ENCODE measurements at regions of chr20 and their contacts with region 1.

Region 1: DNA sequence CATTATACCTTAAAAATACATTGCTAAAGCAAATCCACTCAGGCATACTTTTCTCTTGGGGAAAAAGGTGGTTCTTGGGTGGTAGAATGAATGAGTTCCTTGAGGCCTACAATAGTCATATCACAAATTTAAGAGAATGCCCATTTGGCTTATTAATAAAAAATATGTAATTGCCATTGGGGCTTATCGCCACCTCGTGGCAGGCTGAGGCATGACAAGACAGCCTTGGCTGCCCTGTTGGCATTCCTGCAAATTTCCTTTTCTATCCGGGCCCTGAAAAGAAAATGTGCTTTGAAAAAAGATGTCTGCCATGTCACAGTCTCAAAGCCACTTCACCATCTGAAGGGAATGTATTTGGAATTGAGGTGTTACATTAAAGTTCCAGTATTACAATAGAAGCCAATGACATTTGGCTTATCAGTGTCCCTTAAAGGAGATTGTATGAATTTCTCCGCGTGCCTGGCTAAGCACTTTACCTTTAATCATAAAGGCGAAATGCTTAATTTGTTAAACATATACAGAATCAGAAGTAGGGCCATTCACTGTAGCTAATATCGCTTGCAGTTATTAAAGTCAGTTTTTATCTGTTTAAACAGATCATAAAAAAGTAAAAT is 188.3 kb upstream of the ZFP64 start:
- DNase-seq: no peak
- H3K4me3 Mint-ChIP-seq: no peak overlapping the region
- H3K27ac Mint-ChIP-seq: no peak overlapping the region
- H3K4me1 Mint-ChIP-seq: no peaks in the 10 kb centered on the region
- H3K27me3 Mint-ChIP-seq: no peaks in the 10 kb centered on the region

Region 2: DNA sequence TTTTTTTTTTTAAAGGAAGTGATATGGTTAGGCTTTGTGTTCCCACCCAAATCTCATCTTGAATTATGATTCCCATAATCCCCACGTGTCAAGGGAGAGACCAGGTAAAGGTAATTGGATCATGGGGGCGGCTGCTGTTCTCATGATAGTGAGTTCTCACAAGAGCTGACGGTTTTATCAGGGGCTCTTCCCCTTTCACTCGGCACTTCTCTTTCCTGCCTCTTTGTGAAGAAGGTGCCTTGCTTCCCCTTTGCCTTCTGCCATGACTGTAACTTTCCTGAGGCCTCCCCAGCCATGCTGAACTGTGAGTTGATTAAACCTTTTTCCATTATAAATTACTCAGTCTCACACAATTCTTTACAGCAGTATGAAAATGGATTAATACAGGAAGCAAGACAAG is 252.5 kb before region 1 on chr20:
- intact Hi-C with region 1: loop called (anchors 5 kb)
- DNase-seq: no peak
- H3K4me3 Mint-ChIP-seq: no peak overlapping the region
- H3K27ac Mint-ChIP-seq: no peak overlapping the region
- H3K4me1 Mint-ChIP-seq: no peaks in the 10 kb centered on the region
- H3K27me3 Mint-ChIP-seq: peaks cover 1% of the 10 kb centered on the region

Region 3: DNA sequence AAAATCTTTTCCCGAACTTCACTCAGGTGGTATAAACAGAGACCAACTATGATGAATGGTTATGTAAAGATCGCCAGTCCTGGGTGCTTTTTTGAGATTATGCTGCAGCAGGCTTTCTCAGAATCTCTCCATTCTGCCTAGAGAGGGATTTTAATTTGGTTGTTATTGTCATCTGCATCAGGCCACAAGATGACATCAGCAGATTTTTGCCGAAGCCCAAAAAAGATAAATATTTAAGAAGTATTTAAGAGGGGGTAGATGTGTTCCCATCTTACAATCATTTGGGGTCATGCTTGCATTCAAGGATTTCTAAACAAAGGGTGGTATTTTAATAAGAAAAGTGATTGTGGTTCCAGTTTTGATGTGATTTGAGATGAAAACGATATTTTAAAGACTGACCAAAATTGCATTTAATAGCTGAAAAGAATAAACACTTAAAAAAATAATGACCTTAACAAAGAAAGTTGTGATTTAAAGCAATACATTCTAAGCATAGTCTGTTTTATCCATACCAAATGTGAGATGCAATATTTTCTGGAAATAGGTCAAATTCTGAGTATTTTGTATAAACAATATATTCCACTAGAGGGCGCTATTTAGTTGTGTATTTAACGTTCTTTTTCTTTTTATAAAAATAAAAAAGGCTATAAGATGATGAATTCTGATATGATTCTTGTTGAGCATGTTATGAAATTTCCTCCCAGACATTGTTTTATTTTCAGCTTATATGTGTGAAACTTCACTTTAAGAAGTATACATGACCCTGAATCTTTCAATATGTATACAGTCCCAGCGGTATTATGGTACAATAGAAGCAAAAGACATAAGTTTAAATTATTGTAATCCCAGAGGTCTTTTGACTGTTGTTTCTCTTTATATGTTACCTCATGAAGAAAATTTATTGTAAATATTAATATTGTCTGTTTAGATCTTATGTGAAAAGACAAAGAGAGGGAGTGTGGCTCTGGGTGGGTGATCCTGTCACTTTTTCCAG is 137.3 kb before region 1 on chr20:
- intact Hi-C with region 1: loop called (anchors 2 kb)
- DNase-seq: no peak
- H3K4me3 Mint-ChIP-seq: no peak overlapping the region
- H3K27ac Mint-ChIP-seq: no peak overlapping the region
- H3K4me1 Mint-ChIP-seq: peaks cover 2% of the 10 kb centered on the region
- H3K27me3 Mint-ChIP-seq: no peaks in the 10 kb centered on the region

Region 4: DNA sequence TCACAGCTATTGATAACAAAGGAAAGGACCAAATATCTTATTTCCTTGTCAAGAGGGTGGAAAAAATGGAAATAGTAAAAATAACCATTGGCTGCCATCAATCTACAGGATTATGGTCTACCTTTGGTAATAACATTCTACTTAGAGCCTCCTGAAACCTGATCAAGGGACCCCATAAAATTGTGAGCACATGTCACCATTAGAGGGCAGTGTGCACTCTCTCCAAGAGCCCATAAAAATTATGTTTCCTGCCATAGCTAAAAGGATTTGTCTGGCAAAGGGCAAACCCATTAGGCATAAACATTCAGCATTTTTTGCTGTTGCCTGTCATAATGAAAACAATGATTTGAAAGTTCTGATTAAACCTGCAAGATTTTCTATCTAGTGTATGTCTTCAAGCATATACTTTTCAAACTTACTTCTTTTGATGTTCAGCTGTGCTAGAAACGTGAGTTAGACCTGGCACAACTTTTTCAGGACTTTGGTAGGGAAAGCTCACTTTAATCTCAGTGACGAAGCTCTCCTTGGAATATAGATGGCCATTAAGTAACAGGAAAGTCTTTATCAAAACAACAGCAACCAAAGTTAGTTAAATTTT is 67.6 kb before region 1 on chr20:
- intact Hi-C with region 1: loop called (anchors 5 kb)
- DNase-seq: peak; percentile 31
- H3K4me3 Mint-ChIP-seq: no peak overlapping the region
- H3K27ac Mint-ChIP-seq: no peak overlapping the region
- H3K4me1 Mint-ChIP-seq: peaks cover 12% of the 10 kb centered on the region
- H3K27me3 Mint-ChIP-seq: no peaks in the 10 kb centered on the region

Region 5: DNA sequence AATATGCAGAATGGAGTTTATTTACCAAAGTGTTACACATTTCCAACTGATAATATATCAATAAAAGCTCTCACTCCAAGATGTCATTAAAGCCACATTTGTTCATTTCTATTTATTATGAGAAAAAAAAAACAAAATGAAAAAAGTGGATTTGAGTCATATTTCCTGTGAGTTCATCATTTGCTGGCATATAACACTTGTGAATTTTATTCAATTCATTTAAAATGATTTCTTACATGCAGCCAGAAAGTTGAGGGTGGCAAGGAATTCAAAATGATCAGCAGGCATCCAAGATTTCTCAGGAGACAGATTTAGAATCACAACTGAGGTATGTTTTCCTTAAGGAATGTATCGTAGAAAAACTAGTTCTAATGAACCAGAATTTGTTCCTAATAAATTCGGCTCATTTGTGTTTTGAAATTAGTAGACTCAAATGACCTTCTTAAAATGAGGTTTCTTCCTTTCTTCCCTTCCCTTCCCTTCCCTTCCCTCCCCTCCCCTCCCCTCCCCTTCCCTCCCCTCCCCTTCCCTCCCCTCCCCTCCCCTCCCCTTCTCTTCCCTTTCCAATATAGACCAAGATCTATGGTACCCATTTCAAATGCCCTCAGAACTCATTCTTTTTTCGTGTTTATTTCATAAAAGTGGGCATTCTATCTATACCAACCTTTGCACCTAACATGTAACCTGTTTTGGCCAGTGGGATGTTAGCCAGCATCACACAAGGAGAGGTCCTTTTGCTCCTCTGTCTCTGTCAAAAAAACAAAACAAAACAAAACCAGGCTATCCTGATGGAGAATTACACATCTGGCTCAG is 234.4 kb after region 1 on chr20:
- intact Hi-C with region 1: no loop called
- DNase-seq: no peak
- H3K4me3 Mint-ChIP-seq: no peak overlapping the region
- H3K27ac Mint-ChIP-seq: no peak overlapping the region
- H3K4me1 Mint-ChIP-seq: no peaks in the 10 kb centered on the region
- H3K27me3 Mint-ChIP-seq: peaks cover 2% of the 10 kb centered on the region